ENCODE measurements at regions of chr22 and their contacts with region 1.

Region 1: DNA sequence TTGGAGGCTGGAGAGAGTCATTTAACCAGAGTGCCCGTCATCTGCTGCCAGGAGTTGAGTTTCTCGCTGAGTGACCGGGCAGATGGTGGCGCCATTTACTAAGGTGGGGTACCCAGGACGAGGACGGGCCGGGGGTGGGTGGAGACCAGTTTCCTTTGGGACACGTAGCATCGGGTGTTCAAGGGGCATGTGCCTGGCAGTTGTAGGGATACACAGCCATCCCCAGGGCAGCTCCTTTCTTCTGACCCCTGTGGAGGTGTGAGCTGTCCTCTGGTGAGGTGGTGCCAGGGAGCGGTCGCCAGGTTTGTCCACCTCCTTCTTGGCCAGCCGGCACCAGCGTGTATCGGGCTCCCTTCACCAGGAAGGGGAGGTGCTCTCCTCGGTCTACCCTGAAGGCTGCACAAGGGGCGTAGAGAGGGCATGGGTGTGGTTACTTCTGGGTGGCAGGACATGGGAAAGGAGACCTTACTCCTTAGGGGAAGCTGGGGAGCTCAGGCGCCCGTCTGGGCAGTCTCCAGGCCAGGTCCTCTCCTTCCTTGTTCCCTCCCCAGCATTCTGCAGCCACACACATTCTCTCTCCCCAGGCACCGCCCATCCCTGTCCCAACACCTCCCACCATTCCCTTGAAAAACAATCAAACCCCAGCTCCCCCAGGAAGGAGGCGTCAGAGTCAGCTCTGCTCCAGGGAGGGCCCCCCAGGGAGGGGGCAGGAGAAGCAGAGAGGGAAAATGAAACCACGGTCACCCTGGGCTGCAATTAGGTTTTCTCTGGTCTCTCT is 10.3 kb upstream of the MB start:
- DNase-seq: peak; percentile 83
- ATAC-seq: peak; percentile 72
- H3K4me3 Mint-ChIP-seq: peak overlapping the region; percentile 68
- H3K27ac Mint-ChIP-seq: peak overlapping the region; percentile 33
- H3K4me1 Mint-ChIP-seq: peaks cover 26% of the 10 kb centered on the region
- H3K27me3 Mint-ChIP-seq: no peaks in the 10 kb centered on the region

Region 2: GRCh38 chr22:35301370-35301874 is 326.0 kb before region 1 on chr22:
- CTCF ChIA-PET with region 1: no interaction called
- POLR2A ChIA-PET with region 1: no interaction called
- intact Hi-C with region 1: no loop called
- DNase-seq: peak; percentile 32
- ATAC-seq: no peak
- H3K4me3 Mint-ChIP-seq: peak overlapping the region; percentile 83
- H3K27ac Mint-ChIP-seq: peak overlapping the region; percentile 77
- H3K4me1 Mint-ChIP-seq: peaks cover 50% of the 10 kb centered on the region
- H3K27me3 Mint-ChIP-seq: no peaks in the 10 kb centered on the region

Region 3: GRCh38 chr22:35380547-35381423 is 246.7 kb before region 1 on chr22 and contains the start of gene HMOX1:
- CTCF ChIA-PET with region 1: no interaction called
- POLR2A ChIA-PET with region 1: no interaction called
- intact Hi-C with region 1: no loop called
- DNase-seq: peak; percentile 73
- ATAC-seq: peak; percentile 86
- H3K4me3 Mint-ChIP-seq: peak within 1 kb of the TSS; percentile 35
- H3K27ac Mint-ChIP-seq: no peak within 1 kb of the TSS
- H3K4me1 Mint-ChIP-seq: peaks cover 18% of the 10 kb centered on the region
- H3K27me3 Mint-ChIP-seq: peaks cover 30% of the 10 kb centered on the region
- total RNA-seq, gene HMOX1: 0.30 to 0.61 TPM

Region 4: DNA sequence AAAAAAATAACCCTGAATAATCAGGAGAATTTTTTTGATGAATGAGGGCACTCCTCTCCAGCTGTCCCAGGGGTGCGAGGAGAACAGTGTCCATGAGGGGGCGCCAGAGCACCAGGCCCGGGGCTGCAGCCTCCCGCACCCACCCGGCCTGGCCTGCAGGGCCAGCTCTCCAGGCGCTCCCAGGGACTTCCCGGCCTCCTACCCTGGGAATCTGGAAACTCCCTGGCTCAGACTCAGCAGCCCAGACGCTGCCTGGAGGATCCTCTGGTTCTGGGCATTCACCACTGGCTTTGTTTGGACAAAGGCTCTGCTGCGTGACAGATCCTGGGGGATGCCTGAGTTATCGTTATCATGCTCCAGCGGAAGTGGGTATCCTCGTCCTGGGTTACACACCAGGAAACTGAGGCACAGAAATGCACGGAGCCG is 196.5 kb before region 1 on chr22:
- CTCF ChIA-PET with region 1: no interaction called
- POLR2A ChIA-PET with region 1: no interaction called
- intact Hi-C with region 1: loop called in 1 of 2 experiments (anchors 1 kb)
- DNase-seq: peak; percentile 81
- ATAC-seq: peak; percentile 76
- H3K4me3 Mint-ChIP-seq: no peak overlapping the region
- H3K27ac Mint-ChIP-seq: no peak overlapping the region
- H3K4me1 Mint-ChIP-seq: no peaks in the 10 kb centered on the region
- H3K27me3 Mint-ChIP-seq: no peaks in the 10 kb centered on the region

Region 5: GRCh38 chr22:35582861-35583670 is 44.4 kb before region 1 on chr22:
- CTCF ChIA-PET with region 1: no interaction called
- POLR2A ChIA-PET with region 1: no interaction called
- intact Hi-C with region 1: no loop called
- DNase-seq: peak; percentile 66
- ATAC-seq: peak; percentile 80
- H3K4me3 Mint-ChIP-seq: no peak overlapping the region
- H3K27ac Mint-ChIP-seq: no peak overlapping the region
- H3K4me1 Mint-ChIP-seq: no peaks in the 10 kb centered on the region
- H3K27me3 Mint-ChIP-seq: peaks cover 4% of the 10 kb centered on the region

Region 6: GRCh38 chr22:35690001-35690400 is 62.5 kb after region 1 on chr22:
- CTCF ChIA-PET with region 1: no interaction called
- POLR2A ChIA-PET with region 1: no interaction called
- intact Hi-C with region 1: loop called in 1 of 2 experiments (anchors 5 kb)
- DNase-seq: no peak
- ATAC-seq: no peak
- H3K4me3 Mint-ChIP-seq: no peak overlapping the region
- H3K27ac Mint-ChIP-seq: no peak overlapping the region
- H3K4me1 Mint-ChIP-seq: no peaks in the 10 kb centered on the region
- H3K27me3 Mint-ChIP-seq: no peaks in the 10 kb centered on the region

Region 7: DNA sequence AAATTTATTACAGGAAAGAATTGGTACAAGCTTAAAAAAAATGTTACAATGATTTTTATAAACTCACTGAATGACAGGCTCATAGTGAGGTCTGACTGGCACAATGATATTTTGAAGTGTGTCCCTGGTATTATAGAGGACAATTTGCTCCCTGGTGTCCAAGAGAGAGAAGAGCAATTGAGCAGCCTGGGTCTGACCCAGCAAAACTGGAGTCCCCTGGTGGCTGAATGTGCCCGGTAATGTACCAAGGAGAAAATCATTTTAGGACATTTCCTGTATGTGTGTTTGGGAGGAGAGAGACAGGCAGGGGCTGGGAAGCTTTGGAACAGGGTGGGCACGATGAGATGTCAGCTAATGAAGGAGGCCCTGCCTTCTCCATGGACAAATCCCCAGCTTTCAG is 215.5 kb after region 1 on chr22:
- CTCF ChIA-PET with region 1: no interaction called
- POLR2A ChIA-PET with region 1: no interaction called
- intact Hi-C with region 1: loop called in 1 of 2 experiments (anchors 1 kb)
- DNase-seq: no peak
- ATAC-seq: no peak
- H3K4me3 Mint-ChIP-seq: no peak overlapping the region
- H3K27ac Mint-ChIP-seq: no peak overlapping the region
- H3K4me1 Mint-ChIP-seq: peaks cover 13% of the 10 kb centered on the region
- H3K27me3 Mint-ChIP-seq: peaks cover 11% of the 10 kb centered on the region

Region 8: DNA sequence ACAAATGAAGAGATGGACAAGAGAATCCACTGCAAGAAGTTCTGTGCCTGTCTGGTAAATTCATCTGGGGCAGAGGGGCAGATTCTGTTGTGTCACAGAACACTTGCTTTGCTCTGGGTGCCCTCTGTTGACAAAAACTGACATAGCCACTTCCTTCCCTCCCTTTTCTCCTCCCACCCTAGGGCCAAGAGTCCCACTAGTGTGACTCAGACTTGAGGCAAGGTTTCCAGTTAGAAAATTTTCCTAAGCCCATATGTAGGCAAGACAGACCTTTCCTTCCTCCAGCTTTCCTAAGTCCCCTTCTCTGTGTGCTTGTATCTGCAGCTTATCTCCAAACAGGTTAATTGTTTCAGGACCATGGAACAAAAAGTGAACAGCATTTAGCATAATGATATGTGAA is 294.3 kb after region 1 on chr22:
- CTCF ChIA-PET with region 1: interaction called, 3 read pairs
- POLR2A ChIA-PET with region 1: no interaction called
- intact Hi-C with region 1: loop called (anchors 1 kb)
- DNase-seq: peak; percentile 60
- ATAC-seq: peak; percentile 81
- H3K4me3 Mint-ChIP-seq: no peak overlapping the region
- H3K27ac Mint-ChIP-seq: no peak overlapping the region
- H3K4me1 Mint-ChIP-seq: peaks cover 7% of the 10 kb centered on the region
- H3K27me3 Mint-ChIP-seq: no peaks in the 10 kb centered on the region